Heart right ventricle (tissue), 16 donors: ENCODE measurements at regions of chr7 and their contacts with region 1.

Region 1: GRCh38 chr7:107890962-107891635 is at the start of gene DLD:
- DNase-seq: peak; percentile 95
- ATAC-seq: peak; percentile 98 to 100 (median 99)
- H3K4me3 ChIP-seq: peak within 1 kb of the TSS; percentile 50 to 78 (median 68)
- H3K27ac ChIP-seq: peak within 1 kb of the TSS; percentile 81 to 97 (median 97)
- H3K4me1 ChIP-seq: peaks cover 13 to 52% (median 47%) of the 10 kb centered on the region in 9 donors
- H3K27me3 ChIP-seq: no peaks in the 10 kb centered on the region
- CTCF ChIP-seq: peak in 1 of 9 donors; percentile 6
- total RNA-seq, gene DLD: 257 to 402 (median 353) TPM

Region 2: DNA sequence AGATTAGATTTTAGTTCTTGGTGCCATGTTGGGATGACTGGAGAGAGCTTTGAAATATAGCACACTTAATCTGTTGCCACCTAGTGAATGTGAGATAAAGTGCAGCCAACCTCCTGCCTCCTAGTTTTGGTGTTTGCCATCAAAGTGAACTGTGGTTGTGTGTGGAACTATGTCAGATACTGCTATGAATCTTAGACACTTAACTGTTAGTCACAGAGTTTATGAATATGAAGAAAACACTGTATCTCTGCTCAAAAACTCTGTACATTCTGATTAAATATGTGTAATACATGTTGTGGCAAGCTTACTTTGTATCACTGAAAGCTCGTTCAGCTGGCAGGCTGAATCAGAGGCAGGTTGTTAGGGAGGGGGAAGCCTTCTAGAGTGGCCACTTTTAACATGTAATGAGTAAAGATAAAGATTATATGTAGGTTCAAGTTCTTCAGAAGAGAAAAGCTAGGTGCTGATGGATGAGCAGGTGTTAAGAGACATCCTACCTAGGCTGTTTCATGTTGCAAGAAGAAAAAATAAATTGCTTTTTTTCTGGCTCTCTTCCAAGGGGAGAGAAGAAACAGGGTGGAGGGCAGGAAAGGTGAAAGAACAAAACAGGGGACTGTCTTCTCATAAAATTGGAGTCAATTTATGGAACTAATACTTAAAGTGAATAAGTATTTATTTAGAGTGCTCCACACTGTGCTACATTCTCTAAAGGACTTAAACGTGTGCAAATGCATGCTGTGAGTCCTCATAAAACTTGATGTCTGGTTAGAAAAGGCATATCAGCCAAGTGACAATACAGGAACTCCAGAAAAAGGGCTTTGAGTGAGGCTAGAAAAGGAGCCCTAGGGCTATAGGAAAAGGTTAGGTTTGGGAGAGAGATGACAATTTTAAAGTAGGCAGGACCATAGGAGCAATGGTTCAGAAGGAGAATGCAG is 126.0 kb after region 1 on chr7:
- intact Hi-C with region 1: loop called in 3 of 10 experiments (anchors 5 to 10 kb)
- DNase-seq: no peak
- ATAC-seq: peak in 6 of 8 donors; percentile 37 to 71 (median 51)
- H3K4me3 ChIP-seq: no peak overlapping the region
- H3K27ac ChIP-seq: no peak overlapping the region
- H3K4me1 ChIP-seq: peaks cover 0 to 19% (median 4%) of the 10 kb centered on the region in 9 donors
- H3K27me3 ChIP-seq: no peaks in the 10 kb centered on the region
- CTCF ChIP-seq: peak in 8 of 9 donors; percentile 23 to 66 (median 54)

Region 3: DNA sequence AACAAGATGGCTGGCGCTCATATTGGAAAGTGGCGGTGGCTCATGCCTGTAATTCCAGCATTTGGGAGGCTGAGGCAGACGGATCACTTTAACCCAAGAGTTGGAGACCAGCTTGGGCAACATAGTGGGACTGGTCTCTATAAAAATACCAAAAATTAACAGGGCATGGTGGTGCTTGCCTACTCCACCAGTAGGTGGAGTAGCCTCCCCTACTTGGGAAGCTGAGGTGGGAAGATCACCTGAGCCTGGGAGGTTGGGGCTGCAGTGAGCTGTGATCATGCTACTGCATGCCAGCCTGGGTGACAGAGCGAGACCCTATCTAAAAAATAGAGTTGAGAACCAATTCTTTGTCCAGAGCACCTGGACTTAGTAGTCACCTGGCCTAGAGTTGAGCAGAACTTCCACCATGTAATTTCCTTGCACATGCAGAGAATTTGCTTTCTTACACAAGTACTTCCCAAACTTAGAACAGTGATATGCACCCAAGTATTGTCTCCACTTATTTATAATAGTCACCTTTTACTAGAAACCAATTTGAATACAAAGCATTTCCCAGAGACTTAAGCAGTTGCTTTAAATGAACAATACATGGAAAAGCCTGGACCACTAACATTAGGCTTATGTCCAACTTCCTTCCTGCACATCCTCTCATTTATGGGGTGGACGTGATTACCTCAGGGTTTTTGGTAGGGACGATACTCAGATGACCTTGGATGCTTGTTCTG is 223.2 kb after region 1 on chr7:
- intact Hi-C with region 1: loop called in 1 of 10 experiments (anchors 10 kb)
- DNase-seq: peak in 1 of 2 donors; percentile 21
- ATAC-seq: peak; percentile 58 to 92 (median 82)
- H3K4me3 ChIP-seq: no peak overlapping the region
- H3K27ac ChIP-seq: peak overlapping the region; percentile 42 to 87 (median 62)
- H3K4me1 ChIP-seq: peaks cover 0 to 27% (median 3%) of the 10 kb centered on the region in 9 donors
- H3K27me3 ChIP-seq: no peaks in the 10 kb centered on the region
- CTCF ChIP-seq: peak in 6 of 9 donors; percentile 7 to 36 (median 28)

Region 4: DNA sequence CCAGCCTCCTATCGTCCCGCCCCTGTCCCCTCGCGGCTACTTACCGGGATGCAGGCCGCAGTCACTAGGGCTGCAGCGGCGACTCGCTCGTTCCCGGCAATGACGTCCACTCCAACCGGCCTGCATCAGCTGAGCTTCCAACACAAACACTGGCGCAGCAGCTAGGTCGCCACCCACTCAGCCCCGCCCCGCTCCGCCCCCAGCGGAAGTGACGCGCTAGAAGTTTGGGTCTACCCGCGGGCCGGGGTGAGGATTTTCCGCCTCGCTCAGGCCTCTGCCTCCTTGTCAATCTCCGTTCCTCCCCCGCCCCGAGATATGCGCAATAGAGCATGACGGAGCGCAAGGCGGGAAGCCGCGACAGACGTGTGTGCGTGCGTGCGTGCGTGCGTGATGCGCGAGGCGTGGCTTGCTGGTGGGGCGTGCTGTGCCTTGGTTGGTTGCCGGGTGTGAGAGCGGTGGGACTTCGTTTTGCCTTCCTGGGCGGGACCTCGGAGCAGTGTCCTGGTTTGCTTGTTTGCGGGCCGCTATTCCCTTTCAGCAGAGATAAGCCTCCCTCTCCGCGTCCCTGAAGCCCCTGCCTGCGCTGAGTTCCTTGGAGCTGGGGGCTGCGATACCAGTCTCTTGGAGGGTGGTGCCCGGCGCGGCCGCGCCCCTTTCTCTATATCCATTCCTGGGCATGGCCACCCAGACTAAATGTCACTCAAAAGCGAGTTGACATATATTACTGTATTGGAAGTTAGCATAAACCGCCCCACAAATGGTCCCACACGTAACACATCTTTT is 635.1 kb after region 1 on chr7 and contains the start of gene PNPLA8:
- intact Hi-C with region 1: no loop called
- DNase-seq: peak; percentile 100
- ATAC-seq: peak; percentile 95 to 98 (median 96)
- H3K4me3 ChIP-seq: peak within 1 kb of the TSS; percentile 62 to 80 (median 77)
- H3K27ac ChIP-seq: peak within 1 kb of the TSS; percentile 85 to 99 (median 96)
- H3K4me1 ChIP-seq: peaks cover 7 to 46% (median 32%) of the 10 kb centered on the region in 9 donors
- H3K27me3 ChIP-seq: no peaks in the 10 kb centered on the region
- CTCF ChIP-seq: peak in 2 of 9 donors; percentile 13 to 16
- total RNA-seq, gene PNPLA8: 26.9 to 39.9 (median 36.1) TPM